Activated CD4-positive, alpha-beta T cell treated with anti-CD3 and anti-CD28 coated beads for 36 hours (primary cell): ENCODE measurements at regions of chrX and their contacts with region 1.

Region 1: DNA sequence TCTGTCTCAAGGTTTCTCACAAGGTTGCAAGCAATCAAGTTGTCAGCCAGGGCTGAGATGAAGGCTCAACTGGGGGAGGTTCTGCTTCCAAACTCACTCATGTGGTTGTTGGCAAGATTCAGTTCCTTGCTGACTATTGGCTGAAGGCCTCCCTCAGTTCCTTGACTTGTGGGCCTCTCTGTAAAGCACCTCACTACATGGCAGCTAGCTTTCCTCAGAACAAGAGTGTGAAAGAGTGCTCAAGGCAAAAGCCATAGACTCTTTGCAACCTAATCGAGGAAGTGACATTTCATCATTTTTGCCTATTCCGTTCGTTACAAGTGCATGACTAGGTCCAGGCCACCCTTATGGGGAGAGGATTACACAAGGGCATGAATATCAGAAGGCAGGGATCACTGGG is 52.0 kb downstream of the CXorf58 start:
- DNase-seq: peak; percentile 36
- ATAC-seq: peak; percentile 98
- H3K4me3 Mint-ChIP-seq: no peak overlapping the region
- H3K27ac Mint-ChIP-seq: peak overlapping the region; percentile 79
- H3K4me1 Mint-ChIP-seq: peaks cover 13% of the 10 kb centered on the region
- H3K27me3 Mint-ChIP-seq: no peaks in the 10 kb centered on the region

Region 2: GRCh38 chrX:23861215-23861896 is 98.4 kb before region 1 on chrX:
- CTCF ChIA-PET with region 1: no interaction called
- POLR2A ChIA-PET with region 1: no interaction called
- intact Hi-C with region 1: no loop called
- DNase-seq: no peak
- ATAC-seq: no peak
- H3K4me3 Mint-ChIP-seq: no peak overlapping the region
- H3K27ac Mint-ChIP-seq: no peak overlapping the region
- H3K4me1 Mint-ChIP-seq: no peaks in the 10 kb centered on the region
- H3K27me3 Mint-ChIP-seq: no peaks in the 10 kb centered on the region

Region 3: DNA sequence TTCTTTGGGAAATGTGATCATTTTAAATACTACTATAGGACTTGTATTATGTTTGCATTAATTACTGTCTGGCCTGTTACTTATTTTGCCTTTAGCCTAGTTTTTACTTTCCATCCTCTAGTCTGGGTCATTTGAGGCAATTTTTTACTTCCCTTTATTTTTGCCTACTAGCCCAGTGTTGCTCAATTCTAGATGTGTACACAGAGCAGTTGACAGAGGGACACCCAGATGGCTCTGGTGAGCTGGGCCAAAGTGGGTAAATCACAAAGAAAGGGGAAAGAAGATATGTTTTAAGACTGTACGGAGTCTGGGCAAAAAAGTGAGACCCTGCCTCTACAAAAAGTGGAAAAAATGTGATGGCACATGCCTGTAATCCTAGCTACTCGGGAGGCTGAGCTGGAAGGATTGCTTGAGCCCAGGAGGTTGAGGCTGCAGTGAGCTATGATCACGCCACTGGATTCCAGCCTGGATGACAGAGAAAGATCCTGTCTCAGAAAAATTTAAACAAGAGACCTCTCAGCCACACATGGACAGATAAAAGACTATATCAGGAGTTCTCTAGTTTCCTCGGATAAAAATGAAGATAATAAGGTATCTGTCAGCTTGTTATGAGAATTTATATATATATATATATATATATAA is 87.8 kb before region 1 on chrX:
- CTCF ChIA-PET with region 1: no interaction called
- POLR2A ChIA-PET with region 1: no interaction called
- intact Hi-C with region 1: no loop called
- DNase-seq: no peak
- ATAC-seq: no peak
- H3K4me3 Mint-ChIP-seq: no peak overlapping the region
- H3K27ac Mint-ChIP-seq: no peak overlapping the region
- H3K4me1 Mint-ChIP-seq: no peaks in the 10 kb centered on the region
- H3K27me3 Mint-ChIP-seq: no peaks in the 10 kb centered on the region

Region 4: DNA sequence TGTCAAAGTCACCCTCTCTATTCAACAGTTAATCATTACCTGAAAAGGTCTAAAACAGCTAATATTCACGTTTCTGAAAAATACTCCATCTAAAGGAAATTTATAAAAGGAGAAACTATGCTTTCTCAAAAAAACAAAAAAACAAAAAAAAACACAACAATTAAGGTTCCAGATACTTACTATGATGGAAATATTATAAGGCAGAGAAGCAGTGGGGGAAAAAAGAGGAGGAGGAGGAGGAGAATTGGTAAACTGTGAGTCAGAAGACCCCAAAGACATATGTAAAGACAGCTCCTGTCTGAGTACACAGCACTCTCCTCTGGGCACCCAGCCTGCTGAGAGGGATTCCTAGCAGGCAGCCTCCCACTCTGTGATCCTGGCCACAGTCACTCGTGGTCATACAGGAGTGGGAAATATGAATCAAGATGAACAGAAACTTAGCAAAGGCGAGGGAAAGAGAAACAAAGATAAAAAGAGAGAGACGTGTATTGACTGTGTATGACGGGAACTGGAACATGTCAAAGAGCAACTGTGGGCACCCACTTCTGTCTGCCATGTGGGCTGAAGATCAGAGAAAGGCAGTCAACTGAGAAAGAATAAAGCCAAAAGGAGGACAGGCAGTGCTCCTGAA is 54.7 kb after region 1 on chrX:
- CTCF ChIA-PET with region 1: no interaction called
- POLR2A ChIA-PET with region 1: no interaction called
- intact Hi-C with region 1: loop called in 1 of 2 experiments (anchors 5 kb)
- DNase-seq: peak; percentile 77
- ATAC-seq: peak; percentile 92
- H3K4me3 Mint-ChIP-seq: peak overlapping the region; percentile 62
- H3K27ac Mint-ChIP-seq: peak overlapping the region; percentile 93
- H3K4me1 Mint-ChIP-seq: peaks cover 42% of the 10 kb centered on the region
- H3K27me3 Mint-ChIP-seq: no peaks in the 10 kb centered on the region

Region 5: DNA sequence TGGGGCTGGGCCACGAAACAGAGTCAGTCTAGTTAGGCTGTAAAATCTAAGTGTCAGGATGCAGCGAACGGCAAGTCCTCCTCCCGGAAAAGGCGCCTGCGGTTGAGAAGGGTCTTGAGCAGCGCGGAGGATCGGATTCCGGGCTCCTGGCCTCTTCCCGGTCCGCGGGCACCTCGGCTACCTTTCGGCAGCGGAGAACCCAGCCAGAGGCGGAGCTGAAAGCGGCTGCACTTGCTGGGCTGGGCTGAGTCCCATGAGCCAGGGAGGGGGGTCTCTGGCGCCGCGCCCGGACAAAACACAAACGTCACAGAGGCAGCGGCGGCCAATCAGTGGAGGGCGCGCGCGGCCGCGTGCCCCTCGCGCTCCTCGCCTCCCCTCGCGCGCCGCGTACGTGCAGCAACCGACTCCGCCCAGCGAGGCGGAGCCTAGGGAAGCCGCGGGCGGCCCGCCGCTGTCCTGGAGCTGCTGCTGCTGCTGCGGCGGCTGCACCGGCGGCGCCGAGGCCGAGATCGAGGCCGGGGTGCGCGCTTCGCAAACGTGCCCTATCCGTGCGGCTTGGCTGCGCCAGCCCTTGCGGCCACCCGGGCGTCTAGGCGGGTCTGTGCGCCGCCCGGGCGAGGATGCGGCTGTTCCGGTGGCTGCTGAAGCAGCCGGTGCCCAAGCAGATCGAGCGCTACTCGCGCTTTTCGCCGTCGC is 505.2 kb after region 1 on chrX and contains the start of gene PDK3:
- CTCF ChIA-PET with region 1: no interaction called
- POLR2A ChIA-PET with region 1: no interaction called
- intact Hi-C with region 1: no loop called
- DNase-seq: peak; percentile 91
- ATAC-seq: peak; percentile 93
- H3K4me3 Mint-ChIP-seq: peak within 1 kb of the TSS; percentile 79
- H3K27ac Mint-ChIP-seq: peak within 1 kb of the TSS; percentile 88
- H3K4me1 Mint-ChIP-seq: peaks cover 38% of the 10 kb centered on the region
- H3K27me3 Mint-ChIP-seq: no peaks in the 10 kb centered on the region
- total RNA-seq, gene PDK3: 47.4 to 47.7 TPM